Naive thymus-derived CD8-positive, alpha-beta T cell (primary cell): ENCODE measurements at regions of chr13 and their contacts with region 1.

Region 1: GRCh38 chr13:97432917-97433726 is 847 bp upstream of the RAP2A start:
- DNase-seq: peak; percentile 91 to 100 (median 98)
- ATAC-seq: peak; percentile 79 to 81
- H3K4me3 Mint-ChIP-seq: peak overlapping the region; percentile 91 to 99 (median 96)
- H3K27ac Mint-ChIP-seq: peak overlapping the region; percentile 94 to 100 (median 99)
- H3K4me1 Mint-ChIP-seq: peaks cover 15 to 40% (median 32%) of the 10 kb centered on the region in 4 donors
- H3K27me3 Mint-ChIP-seq: peaks cover 0 to 11% (median 4%) of the 10 kb centered on the region in 5 donors

Region 2: DNA sequence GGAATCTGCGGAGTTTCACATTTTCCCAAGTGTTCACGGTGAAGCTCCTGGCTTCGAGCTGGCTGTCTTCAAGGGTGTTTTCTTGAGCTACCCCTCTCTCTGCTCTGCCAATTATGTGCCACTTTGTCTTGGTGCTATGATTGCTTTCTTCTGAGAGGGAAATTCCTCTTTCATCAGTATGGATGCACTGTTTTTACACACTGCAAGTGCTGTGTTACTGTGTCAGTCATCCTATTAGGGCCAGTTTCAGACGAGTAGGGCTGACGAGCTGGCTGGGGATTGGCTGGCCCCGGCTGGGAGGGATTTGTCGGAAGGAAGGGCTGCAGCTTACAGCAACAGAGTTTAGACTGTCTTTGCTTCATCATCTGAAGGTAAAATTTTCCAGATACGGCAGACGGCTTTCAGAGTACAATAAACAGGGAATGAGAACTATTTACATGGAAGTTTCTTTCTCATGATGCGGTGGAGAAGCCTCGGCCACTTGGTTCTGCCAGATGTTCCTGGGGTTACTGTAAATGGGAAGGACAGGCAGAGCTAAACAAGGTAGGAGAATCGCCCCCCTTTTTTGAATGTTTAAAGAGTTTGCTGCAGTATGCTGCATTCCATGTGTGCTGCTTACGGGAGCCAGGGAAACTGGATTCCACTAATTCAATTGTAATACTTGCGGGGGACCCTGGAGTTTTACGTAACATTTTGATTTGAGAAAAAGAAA is 211.0 kb before region 1 on chr13 and contains the start of gene MBNL2:
- POLR2A ChIA-PET with region 1: interaction called, 20 read pairs
- DNase-seq: peak; percentile 70 to 90 (median 84)
- ATAC-seq: peak; percentile 95
- H3K4me3 Mint-ChIP-seq: peak within 1 kb of the TSS; percentile 83 to 98 (median 94)
- H3K27ac Mint-ChIP-seq: peak within 1 kb of the TSS; percentile 93 to 98 (median 96)
- H3K4me1 Mint-ChIP-seq: peaks cover 27 to 50% (median 44%) of the 10 kb centered on the region in 4 donors
- H3K27me3 Mint-ChIP-seq: no peaks in the 10 kb centered on the region
- polyA plus RNA-seq, gene MBNL2: 12.2 to 14.5 (median 14.5) TPM

Region 3: GRCh38 chr13:97235549-97236231 is 197.4 kb before region 1 on chr13:
- POLR2A ChIA-PET with region 1: no interaction called
- DNase-seq: no peak
- ATAC-seq: no peak
- H3K4me3 Mint-ChIP-seq: peak overlapping the region in 1 of 10 donors; percentile 15
- H3K27ac Mint-ChIP-seq: peak overlapping the region in 1 of 10 donors; percentile 47
- H3K4me1 Mint-ChIP-seq: peaks cover 40 to 94% (median 72%) of the 10 kb centered on the region in 4 donors
- H3K27me3 Mint-ChIP-seq: no peaks in the 10 kb centered on the region

Region 4: DNA sequence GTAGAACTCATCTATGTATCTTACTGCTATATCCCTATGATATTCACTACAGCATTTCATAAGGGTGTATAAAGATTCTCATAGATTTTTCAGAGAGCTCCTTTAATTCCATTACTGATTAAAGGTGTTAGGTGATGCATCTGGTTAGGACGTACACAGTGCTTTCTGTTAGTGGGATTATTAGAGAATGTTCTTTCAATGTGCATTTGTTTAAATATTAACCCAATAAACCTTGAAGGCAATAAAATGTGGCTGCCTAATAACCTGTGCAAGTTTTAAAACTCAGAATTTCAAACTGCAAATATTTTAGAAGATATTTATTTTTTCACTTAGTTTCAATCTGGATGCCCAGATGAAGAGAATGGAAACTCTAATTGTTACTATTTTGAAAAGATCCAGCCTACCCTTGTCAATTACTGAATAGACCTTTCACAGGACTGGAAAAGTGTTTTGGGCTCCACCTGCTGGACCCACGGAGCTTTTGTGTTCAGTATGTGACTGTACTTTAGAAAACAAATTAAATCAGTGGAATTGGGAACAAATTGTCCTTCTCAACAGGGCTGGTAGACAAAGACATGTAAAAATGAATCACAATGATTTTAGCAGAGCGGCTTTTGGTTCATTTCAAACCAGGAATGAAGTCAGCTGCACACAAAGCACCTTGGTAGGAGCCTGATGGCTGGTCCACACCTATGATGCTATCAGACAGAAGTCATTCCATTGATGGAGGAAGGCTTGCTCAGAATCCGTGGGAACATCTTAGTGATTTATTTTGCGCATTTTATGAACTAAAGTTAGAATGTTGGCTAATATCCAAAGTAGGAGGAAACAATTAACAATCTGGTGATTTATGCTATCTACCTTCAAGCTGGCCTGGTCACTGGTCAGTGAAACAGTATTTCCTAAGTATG is 88.6 kb before region 1 on chr13:
- POLR2A ChIA-PET with region 1: no interaction called
- DNase-seq: peak; percentile 7 to 64 (median 30)
- ATAC-seq: peak; percentile 49 to 53
- H3K4me3 Mint-ChIP-seq: no peak overlapping the region
- H3K27ac Mint-ChIP-seq: no peak overlapping the region
- H3K4me1 Mint-ChIP-seq: peaks cover 0 to 3% (median 0%) of the 10 kb centered on the region in 4 donors
- H3K27me3 Mint-ChIP-seq: no peaks in the 10 kb centered on the region

Region 5: DNA sequence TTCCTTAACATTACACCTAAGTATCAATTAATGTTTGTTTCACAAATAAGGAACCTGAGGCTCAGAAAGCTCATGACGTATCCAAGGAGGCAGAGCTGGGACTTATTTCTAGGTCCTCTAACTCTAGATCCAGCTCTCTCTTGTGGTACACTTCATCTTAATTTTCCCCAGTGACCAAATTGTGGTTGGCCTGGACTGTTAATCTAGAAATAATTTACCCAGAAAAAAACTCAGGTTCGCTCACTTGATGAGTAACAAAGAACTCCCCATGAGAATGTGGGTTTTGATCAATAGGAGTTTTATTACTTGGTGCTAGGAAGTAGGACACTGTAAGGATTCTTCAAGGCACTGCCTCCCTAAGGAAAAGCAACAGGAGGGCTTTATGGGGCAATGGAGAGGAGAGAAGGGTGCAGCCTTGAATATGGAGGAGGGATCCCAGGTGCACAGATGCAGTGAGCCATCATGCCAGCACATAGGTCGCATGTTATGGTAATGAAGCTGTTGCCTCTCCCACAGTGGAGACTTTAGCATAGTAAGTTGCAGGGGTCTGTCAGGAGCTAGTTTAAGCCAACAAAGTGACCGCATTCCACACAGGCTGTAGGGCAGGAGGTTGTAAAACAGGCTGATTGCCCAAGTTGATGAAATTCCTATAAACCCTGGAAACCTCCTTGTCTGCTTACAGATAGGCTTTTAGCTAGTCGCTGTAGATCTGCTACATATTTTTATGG is 15.5 kb after region 1 on chr13:
- POLR2A ChIA-PET with region 1: no interaction called
- DNase-seq: no peak
- ATAC-seq: no peak
- H3K4me3 Mint-ChIP-seq: no peak overlapping the region
- H3K27ac Mint-ChIP-seq: peak overlapping the region in 1 of 10 donors; percentile 10
- H3K4me1 Mint-ChIP-seq: peaks cover 4 to 28% (median 14%) of the 10 kb centered on the region in 4 donors
- H3K27me3 Mint-ChIP-seq: no peaks in the 10 kb centered on the region

Region 6: GRCh38 chr13:97460004-97460775 is 27.1 kb after region 1 on chr13:
- POLR2A ChIA-PET with region 1: interaction called, 11 read pairs
- DNase-seq: peak in 2 of 10 donors; percentile 13 to 18
- ATAC-seq: peak; percentile 71 to 72
- H3K4me3 Mint-ChIP-seq: peak overlapping the region in 5 of 10 donors; percentile 16 to 75 (median 71)
- H3K27ac Mint-ChIP-seq: peak overlapping the region in 9 of 10 donors; percentile 11 to 76 (median 20)
- H3K4me1 Mint-ChIP-seq: peaks cover 20 to 48% (median 43%) of the 10 kb centered on the region in 4 donors
- H3K27me3 Mint-ChIP-seq: no peaks in the 10 kb centered on the region